ENCODE measurements at regions of chr2 and their contacts with region 1.

Region 1: DNA sequence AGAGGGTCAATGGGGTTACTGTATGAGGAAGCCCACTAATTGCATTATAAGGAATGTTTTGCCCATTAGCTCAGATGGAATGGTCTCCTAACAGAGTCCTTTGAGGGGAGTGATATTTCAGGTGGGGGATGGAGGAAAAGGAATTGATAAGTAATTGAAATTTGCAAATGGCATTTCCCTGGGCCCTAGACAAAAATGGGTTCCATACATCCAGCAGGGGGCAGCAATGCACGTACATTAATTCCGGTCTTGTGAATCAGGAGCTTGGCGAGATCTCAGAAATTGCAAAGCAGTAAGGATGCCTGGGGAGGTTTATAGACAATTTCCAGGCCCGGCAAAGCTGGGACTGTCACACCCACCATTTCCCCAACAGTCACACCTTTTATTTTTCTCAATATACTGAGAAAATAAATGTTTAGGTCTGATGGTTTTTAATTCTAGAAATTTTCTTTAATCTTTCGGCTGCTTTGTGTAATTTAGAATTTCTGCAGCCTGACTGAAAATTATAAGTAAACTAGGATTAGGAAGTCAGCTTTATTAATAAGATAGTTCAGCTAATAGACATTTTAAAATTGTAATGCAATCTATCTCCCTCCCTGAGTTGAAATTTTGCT is 122.8 kb downstream of the LYPD1 start:
- DNase-seq: peak; percentile 55 to 71 (median 56)
- ATAC-seq: peak; percentile 75
- H3K4me3 ChIP-seq: no peak overlapping the region
- H3K27ac ChIP-seq: no peak overlapping the region
- H3K4me1 ChIP-seq: no peaks in the 10 kb centered on the region
- H3K27me3 ChIP-seq: no peaks in the 10 kb centered on the region
- CTCF ChIP-seq: peak; percentile 58 to 71 (median 63)
- EP300 ChIP-seq: no peak
- POLR2A ChIP-seq: no peak
- RAD21 ChIP-seq: peak; percentile 37 to 69; a peak in 3 of 4 replicates

Region 2: DNA sequence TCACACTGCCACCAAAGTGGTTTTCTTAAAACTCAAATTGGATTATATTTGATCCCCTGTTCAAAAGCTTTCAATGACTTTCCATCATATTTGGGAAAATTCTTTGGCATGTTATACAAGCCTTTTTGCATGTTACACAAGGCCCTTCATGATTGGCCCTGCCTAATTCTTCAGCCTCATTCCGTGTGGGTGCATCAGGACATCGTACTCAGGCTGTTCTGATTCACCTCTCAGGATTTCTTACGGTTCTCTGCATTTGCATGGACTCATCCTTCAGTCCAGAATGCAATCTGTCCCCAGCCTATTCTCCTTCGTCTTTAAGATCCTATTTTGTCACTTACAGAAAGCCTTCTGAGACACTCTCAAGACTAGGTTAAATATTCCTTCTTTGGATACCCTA is 15.1 kb after region 1 on chr2:
- CTCF ChIA-PET with region 1: no interaction called
- POLR2A ChIA-PET with region 1: no interaction called
- in situ Hi-C with region 1: no loop called
- intact Hi-C with region 1: no loop called
- DNase-seq: no peak
- ATAC-seq: no peak
- H3K4me3 ChIP-seq: no peak overlapping the region
- H3K27ac ChIP-seq: no peak overlapping the region
- H3K4me1 ChIP-seq: no peaks in the 10 kb centered on the region
- H3K27me3 ChIP-seq: no peaks in the 10 kb centered on the region; a peak in 1 of 5 replicates
- CTCF ChIP-seq: no peak
- EP300 ChIP-seq: no peak
- POLR2A ChIP-seq: no peak
- RAD21 ChIP-seq: no peak

Region 3: GRCh38 chr2:133171393-133172004 is 624.3 kb after region 1 on chr2:
- CTCF ChIA-PET with region 1: no interaction called
- POLR2A ChIA-PET with region 1: no interaction called
- in situ Hi-C with region 1: no loop called
- intact Hi-C with region 1: loop called (anchors 1 kb)
- DNase-seq: peak in 2 of 4 experiments; percentile 8 to 51
- ATAC-seq: no peak
- H3K4me3 ChIP-seq: no peak overlapping the region
- H3K27ac ChIP-seq: no peak overlapping the region
- H3K4me1 ChIP-seq: no peaks in the 10 kb centered on the region
- H3K27me3 ChIP-seq: no peaks in the 10 kb centered on the region
- CTCF ChIP-seq: peak in 2 of 3 experiments; percentile 44 to 59; a peak in 5 of 6 replicates
- EP300 ChIP-seq: no peak
- POLR2A ChIP-seq: no peak
- RAD21 ChIP-seq: peak; percentile 47 to 75

Region 4: DNA sequence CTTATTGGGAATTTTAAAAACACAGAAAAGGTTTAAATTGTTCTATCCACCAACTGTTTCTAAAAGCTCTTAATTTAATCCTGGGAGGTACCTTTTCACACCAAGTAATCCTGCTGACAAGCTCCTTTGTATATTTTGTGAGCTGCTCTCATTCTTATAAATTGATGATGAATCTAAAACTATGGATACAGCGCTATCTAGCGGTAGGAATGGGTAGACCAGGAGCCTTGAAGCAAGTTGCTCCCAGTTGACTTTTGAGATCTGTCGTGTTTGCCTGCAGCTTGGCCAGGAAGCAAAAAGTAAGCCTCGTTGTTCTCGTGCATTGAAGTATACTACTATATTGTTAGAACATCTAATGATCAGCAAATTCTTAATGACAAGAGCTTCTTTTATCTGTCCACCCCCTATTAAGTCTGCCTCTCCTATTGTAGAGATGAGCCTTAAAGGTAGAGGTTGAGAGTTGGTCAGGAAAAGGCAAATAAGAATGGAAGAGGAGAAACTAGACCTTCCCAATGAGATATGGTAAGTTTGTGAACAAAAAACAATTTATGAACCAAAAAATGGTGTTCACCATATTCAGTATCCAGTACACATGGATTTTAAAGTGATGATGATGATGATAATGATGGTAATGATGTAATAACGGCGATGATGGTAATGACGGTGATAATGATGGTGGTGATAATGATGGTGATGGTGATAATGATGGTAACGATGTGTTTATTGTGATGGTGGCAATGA is 1233.1 kb after region 1 on chr2:
- CTCF ChIA-PET with region 1: interaction called, 3 read pairs
- POLR2A ChIA-PET with region 1: no interaction called
- in situ Hi-C with region 1: no loop called
- intact Hi-C with region 1: loop called (anchors 1 kb)
- DNase-seq: peak; percentile 33 to 68 (median 51)
- ATAC-seq: peak; percentile 72
- H3K4me3 ChIP-seq: no peak overlapping the region
- H3K27ac ChIP-seq: no peak overlapping the region
- H3K4me1 ChIP-seq: no peaks in the 10 kb centered on the region
- H3K27me3 ChIP-seq: no peaks in the 10 kb centered on the region
- CTCF ChIP-seq: peak; percentile 55 to 78 (median 74)
- EP300 ChIP-seq: no peak
- POLR2A ChIP-seq: no peak
- RAD21 ChIP-seq: peak; percentile 44 to 66